ENCODE measurements at regions of chr12 and their contacts with region 1.

Region 1: GRCh38 chr12:14365294-14366208 is at the start of gene ATF7IP:
- DNase-seq: peak; percentile 99
- H3K4me3 ChIP-seq: peak within 1 kb of the TSS; percentile 50
- H3K27ac ChIP-seq: peak within 1 kb of the TSS; percentile 94
- H3K4me1 ChIP-seq: peaks cover 4% of the 10 kb centered on the region
- H3K27me3 ChIP-seq: no peaks in the 10 kb centered on the region
- CTCF ChIP-seq: peak; percentile 48
- total RNA-seq, gene ATF7IP: 98.3 and 100 TPM in 2 replicates

Region 2: GRCh38 chr12:14417715-14418114 is 52.2 kb after region 1 on chr12:
- CTCF ChIA-PET with region 1: no interaction called
- POLR2A ChIA-PET with region 1: interaction called, 3 read pairs
- intact Hi-C with region 1: loop called (anchors 2 kb)
- DNase-seq: peak; percentile 90
- H3K4me3 ChIP-seq: peak overlapping the region; percentile 34
- H3K27ac ChIP-seq: peak overlapping the region; percentile 78
- H3K4me1 ChIP-seq: peaks cover 50% of the 10 kb centered on the region
- H3K27me3 ChIP-seq: no peaks in the 10 kb centered on the region
- CTCF ChIP-seq: no peak

Region 3: GRCh38 chr12:14454098-14454907 is 88.8 kb after region 1 on chr12:
- CTCF ChIA-PET with region 1: no interaction called
- POLR2A ChIA-PET with region 1: no interaction called
- intact Hi-C with region 1: no loop called
- DNase-seq: peak; percentile 73
- H3K4me3 ChIP-seq: no peak overlapping the region
- H3K27ac ChIP-seq: no peak overlapping the region
- H3K4me1 ChIP-seq: no peaks in the 10 kb centered on the region
- H3K27me3 ChIP-seq: no peaks in the 10 kb centered on the region
- CTCF ChIP-seq: peak; percentile 76

Measured in A673 (cell line).